ENCODE measurements at regions of chr4 and their contacts with region 1.

Region 1: GRCh38 chr4:145557720-145558119 is 61.5 kb upstream of the MMAA start:
- DNase-seq: peak; percentile 72
- ATAC-seq: peak; percentile 85
- H3K4me3 Mint-ChIP-seq: no peak overlapping the region
- H3K27ac Mint-ChIP-seq: no peak overlapping the region
- H3K4me1 Mint-ChIP-seq: peaks cover under 1% of the 10 kb centered on the region
- H3K27me3 Mint-ChIP-seq: no peaks in the 10 kb centered on the region
- CTCF ChIP-seq: peak; percentile 88

Region 2: DNA sequence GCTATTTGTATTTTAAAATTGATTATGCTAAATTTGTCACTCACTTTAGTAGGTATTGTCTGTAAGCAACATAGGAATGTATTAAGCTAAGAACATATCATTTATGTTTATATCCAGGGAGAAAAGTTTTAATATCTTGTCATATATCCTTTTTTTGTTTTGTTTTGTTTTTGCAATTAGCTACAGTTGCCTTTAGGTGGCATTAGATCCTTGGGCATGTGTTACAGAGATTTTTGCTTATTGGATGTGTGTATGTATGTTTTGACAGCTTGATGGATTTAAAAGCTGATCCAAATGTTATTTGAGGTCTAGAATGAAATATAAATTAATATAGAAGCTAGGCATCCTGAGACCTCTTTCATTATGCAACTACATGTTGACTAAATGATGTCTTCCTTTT is 341.2 kb before region 1 on chr4:
- CTCF ChIA-PET with region 1: interaction called, 10 read pairs
- POLR2A ChIA-PET with region 1: no interaction called
- intact Hi-C with region 1: no loop called
- DNase-seq: no peak
- ATAC-seq: no peak
- H3K4me3 Mint-ChIP-seq: no peak overlapping the region
- H3K27ac Mint-ChIP-seq: no peak overlapping the region
- H3K4me1 Mint-ChIP-seq: no peaks in the 10 kb centered on the region
- H3K27me3 Mint-ChIP-seq: peaks cover 4% of the 10 kb centered on the region
- CTCF ChIP-seq: peak; percentile 40

Region 3: GRCh38 chr4:145609481-145610427 is 52.0 kb after region 1 on chr4:
- CTCF ChIA-PET with region 1: interaction called, 13 read pairs
- POLR2A ChIA-PET with region 1: no interaction called
- intact Hi-C with region 1: no loop called
- DNase-seq: peak; percentile 87
- ATAC-seq: peak; percentile 77
- H3K4me3 Mint-ChIP-seq: no peak overlapping the region
- H3K27ac Mint-ChIP-seq: no peak overlapping the region
- H3K4me1 Mint-ChIP-seq: peaks cover 14% of the 10 kb centered on the region
- H3K27me3 Mint-ChIP-seq: peaks cover 2% of the 10 kb centered on the region
- CTCF ChIP-seq: peak; percentile 79